Vagina (tissue), 2 donors: ENCODE measurements at regions of chr20 and their contacts with region 1.

Region 1: DNA sequence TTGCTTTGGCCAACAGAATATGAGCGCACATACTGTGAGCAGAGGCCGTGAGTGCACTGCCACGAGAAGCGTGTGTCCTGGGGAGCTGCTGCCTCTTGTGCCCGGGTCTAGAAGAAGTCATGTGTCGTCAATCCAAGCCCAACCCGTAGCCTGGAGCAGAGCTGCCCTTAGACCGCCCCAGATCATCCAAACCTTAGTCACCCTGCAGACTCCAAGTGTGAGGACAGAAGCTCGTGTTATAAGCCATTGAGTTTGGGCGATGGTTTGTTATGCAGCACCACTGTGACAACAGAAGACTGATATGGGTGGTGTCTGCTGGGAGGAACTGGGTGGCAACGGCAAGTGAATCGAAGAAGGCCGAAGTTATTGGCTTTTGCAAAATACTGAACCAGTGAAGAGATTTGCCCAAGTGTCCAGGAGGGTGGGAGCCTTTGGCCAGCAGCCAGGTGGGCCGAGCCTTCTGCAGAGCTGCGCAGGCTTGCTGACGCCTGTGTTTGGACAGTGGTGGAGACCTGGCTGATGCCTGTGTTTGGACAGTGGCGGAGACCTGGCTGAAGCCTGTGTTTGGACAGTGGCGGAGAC is 101.3 kb upstream of the SULF2 start:
- DNase-seq: no peak
- H3K4me3 ChIP-seq: no peak overlapping the region
- H3K27ac ChIP-seq: no peak overlapping the region
- H3K4me1 ChIP-seq: no peaks in the 10 kb centered on the region
- H3K27me3 ChIP-seq: no peaks in the 10 kb centered on the region
- CTCF ChIP-seq: no peak
- POLR2A ChIP-seq: no peak

Region 2: DNA sequence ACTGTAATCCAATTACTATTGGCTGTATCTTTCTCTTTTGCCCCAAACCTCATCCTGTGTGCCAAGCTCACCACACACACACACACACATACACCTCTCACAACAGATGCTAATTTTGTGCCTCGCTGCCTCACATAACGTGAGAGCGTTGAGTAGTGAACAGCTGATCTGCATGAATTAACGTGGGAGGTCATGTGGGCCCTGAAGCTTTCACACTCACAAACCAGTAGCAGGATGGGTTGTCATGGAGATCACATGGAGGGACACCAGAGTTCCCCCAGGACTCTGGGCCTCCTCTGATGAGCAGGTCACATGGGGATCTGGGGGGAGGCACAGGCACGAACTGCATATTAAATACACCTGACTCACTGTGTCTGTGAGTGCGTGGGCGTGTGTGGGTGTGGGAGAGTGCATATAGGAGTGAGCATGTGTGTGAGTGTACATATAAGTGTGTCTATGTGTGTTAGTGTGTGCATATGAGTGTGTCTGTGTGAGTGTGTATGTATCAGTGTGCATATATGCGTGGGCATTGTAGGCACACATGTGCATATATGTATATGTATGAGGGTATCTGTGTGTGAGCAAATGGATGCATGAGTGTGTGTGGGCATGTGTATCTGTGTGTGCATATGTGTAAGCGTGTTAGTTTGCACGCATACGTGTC is 38.6 kb before region 1 on chr20:
- intact Hi-C with region 1: loop called (anchors 10 kb)
- DNase-seq: no peak
- H3K4me3 ChIP-seq: no peak overlapping the region
- H3K27ac ChIP-seq: no peak overlapping the region
- H3K4me1 ChIP-seq: no peaks in the 10 kb centered on the region
- H3K27me3 ChIP-seq: no peaks in the 10 kb centered on the region
- CTCF ChIP-seq: no peak
- POLR2A ChIP-seq: no peak

Region 3: GRCh38 chr20:48523212-48523941 is 636.8 kb after region 1 on chr20:
- intact Hi-C with region 1: loop called (anchors 5 kb)
- DNase-seq: peak in 1 of 2 donors; percentile 40
- H3K4me3 ChIP-seq: no peak overlapping the region
- H3K27ac ChIP-seq: no peak overlapping the region
- H3K4me1 ChIP-seq: no peaks in the 10 kb centered on the region
- H3K27me3 ChIP-seq: no peaks in the 10 kb centered on the region
- CTCF ChIP-seq: no peak
- POLR2A ChIP-seq: no peak